CD14-positive monocyte (primary cell): ENCODE measurements at regions of chr1 and their contacts with region 1.

Region 1: GRCh38 chr1:234963180-234963903 is 165.3 kb downstream of the TOMM20 start:
- DNase-seq: peak; percentile 98 to 100 (median 99)
- H3K4me3 ChIP-seq: peak overlapping the region in 1 of 3 experiments; percentile 19
- H3K4me3 Mint-ChIP-seq: peak overlapping the region; percentile 70 to 85
- H3K27ac ChIP-seq: peak overlapping the region; percentile 89 to 100
- H3K27ac Mint-ChIP-seq: peak overlapping the region; percentile 98 to 100 (median 100)
- H3K4me1 ChIP-seq: peaks cover 73 to 78% of the 10 kb centered on the region in 2 donors
- H3K4me1 Mint-ChIP-seq: peaks cover 74% of the 10 kb centered on the region
- H3K27me3 ChIP-seq: no peaks in the 10 kb centered on the region
- H3K27me3 Mint-ChIP-seq: peaks cover 0 to 2% (median 0%) of the 10 kb centered on the region in 3 donors
- CTCF ChIP-seq: no peak

Region 2: DNA sequence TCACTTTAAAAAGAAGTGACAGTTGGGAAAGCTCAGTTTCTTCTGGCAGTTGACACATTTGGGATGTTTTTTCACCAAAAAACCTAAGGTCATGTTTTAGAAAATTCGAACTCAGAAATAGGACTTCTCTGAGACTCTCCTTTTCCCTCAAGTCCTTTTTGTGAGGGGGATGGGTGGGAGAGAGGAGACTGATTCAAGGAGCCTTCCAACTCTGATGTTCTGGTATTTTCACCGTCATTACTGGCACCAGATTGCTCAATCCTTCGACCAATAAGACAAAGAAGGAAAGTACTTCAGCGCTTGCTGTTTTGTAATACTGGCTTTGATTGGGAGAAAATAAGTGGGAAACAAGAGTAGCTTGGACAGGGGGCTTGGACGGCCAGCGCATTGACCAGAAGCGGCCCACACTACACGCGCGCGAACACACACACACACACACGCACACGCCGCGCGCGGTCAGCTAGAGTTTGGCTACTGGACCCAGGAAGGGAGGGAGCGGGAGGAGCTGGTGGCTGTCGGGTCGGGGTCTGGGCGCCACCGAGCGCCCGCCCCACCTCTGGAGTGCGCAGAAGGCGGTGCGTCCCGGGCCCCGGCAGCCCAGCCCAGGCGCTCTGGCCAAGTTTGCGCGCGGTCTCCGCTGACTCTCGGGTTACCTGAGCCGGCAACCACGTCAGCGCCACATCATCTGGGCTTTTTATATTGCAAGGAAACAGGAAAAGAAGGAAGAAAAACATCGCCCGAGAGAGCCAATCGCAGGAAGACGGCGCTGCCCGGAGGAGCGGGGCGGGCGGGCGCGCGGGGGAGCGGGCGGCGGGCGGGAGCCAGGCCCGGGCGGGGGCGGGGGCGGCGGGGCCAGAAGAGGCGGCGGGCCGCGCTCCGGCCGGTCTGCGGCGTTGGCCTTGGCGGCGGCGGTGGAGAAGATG is 1349.8 kb before region 1 on chr1 and contains the start of gene KCNK1:
- intact Hi-C with region 1: no loop called
- DNase-seq: no peak
- H3K4me3 ChIP-seq: no peak within 1 kb of the TSS
- H3K4me3 Mint-ChIP-seq: peak within 1 kb of the TSS; percentile 49 to 80
- H3K27ac ChIP-seq: no peak within 1 kb of the TSS
- H3K27ac Mint-ChIP-seq: no peak within 1 kb of the TSS
- H3K4me1 ChIP-seq: no peaks in the 10 kb centered on the region
- H3K4me1 Mint-ChIP-seq: no peaks in the 10 kb centered on the region
- H3K27me3 ChIP-seq: peaks cover 28 to 55% of the 10 kb centered on the region in 2 donors
- H3K27me3 Mint-ChIP-seq: peaks cover 41 to 64% (median 60%) of the 10 kb centered on the region in 3 donors
- CTCF ChIP-seq: no peak
- polyA plus RNA-seq, gene KCNK1: not detected

Region 3: DNA sequence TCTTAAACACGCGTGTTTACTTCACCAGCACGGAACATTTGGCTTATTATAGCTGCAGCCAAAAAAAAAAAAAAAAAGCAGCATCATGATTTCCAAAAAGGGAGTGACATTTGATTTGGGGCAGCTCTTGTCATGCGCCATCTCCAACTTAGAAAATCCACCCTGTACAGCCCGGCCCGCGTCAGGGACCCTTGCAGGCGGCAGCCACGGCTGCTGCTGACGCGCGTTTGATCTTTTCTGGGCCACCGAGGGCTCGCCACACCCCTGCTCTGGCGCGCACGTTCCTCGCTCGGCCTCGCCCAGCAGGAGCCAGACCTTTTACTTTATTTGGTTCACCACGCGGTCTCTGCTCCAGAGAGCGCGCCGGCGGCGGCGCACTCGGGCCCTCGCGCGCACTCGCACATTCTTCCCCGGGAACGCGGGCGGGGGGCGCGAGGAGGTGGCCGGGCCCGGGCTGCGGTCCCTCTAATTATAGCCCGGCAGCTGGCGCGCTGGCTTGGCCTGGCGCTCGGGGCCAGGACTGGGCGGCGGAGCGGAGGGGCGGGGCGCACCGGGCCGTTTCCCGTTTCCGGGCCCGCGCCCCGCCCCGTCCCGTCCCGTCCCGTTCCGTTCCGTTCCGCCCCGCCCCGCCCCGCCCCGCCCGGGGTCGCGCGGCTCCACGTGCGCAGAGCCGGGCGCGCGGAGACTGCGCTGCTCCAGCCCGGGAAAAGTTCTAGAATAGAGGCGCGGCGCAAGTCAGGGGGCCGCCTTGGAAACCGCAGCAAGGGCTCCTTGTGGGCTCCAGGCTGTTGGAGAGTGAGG is 363.5 kb before region 1 on chr1:
- intact Hi-C with region 1: loop called in 1 of 2 experiments (anchors 5 kb)
- DNase-seq: peak; percentile 61 to 70 (median 65)
- H3K4me3 ChIP-seq: peak overlapping the region; percentile 46 to 95 (median 52)
- H3K4me3 Mint-ChIP-seq: peak overlapping the region; percentile 88 to 100
- H3K27ac ChIP-seq: peak overlapping the region; percentile 81 to 89
- H3K27ac Mint-ChIP-seq: peak overlapping the region; percentile 93 to 100 (median 93)
- H3K4me1 ChIP-seq: peaks cover 57 to 66% of the 10 kb centered on the region in 2 donors
- H3K4me1 Mint-ChIP-seq: peaks cover 42% of the 10 kb centered on the region
- H3K27me3 ChIP-seq: no peaks in the 10 kb centered on the region
- H3K27me3 Mint-ChIP-seq: peaks cover 0 to 2% (median 0%) of the 10 kb centered on the region in 3 donors
- CTCF ChIP-seq: no peak

Region 4: GRCh38 chr1:234851450-234852438 is 111.6 kb before region 1 on chr1:
- intact Hi-C with region 1: loop called in 1 of 2 experiments (anchors 5 kb)
- DNase-seq: peak; percentile 86 to 96 (median 96)
- H3K4me3 ChIP-seq: peak overlapping the region in 1 of 3 experiments; percentile 9
- H3K4me3 Mint-ChIP-seq: peak overlapping the region in 1 of 2 donors; percentile 15
- H3K27ac ChIP-seq: peak overlapping the region; percentile 93 to 100
- H3K27ac Mint-ChIP-seq: peak overlapping the region; percentile 95 to 100 (median 97)
- H3K4me1 ChIP-seq: peaks cover 79 to 84% of the 10 kb centered on the region in 2 donors
- H3K4me1 Mint-ChIP-seq: peaks cover 87% of the 10 kb centered on the region
- H3K27me3 ChIP-seq: no peaks in the 10 kb centered on the region
- H3K27me3 Mint-ChIP-seq: peaks cover 0 to 2% (median 1%) of the 10 kb centered on the region in 3 donors
- CTCF ChIP-seq: no peak

Region 5: GRCh38 chr1:234866007-234866866 is 97.1 kb before region 1 on chr1:
- intact Hi-C with region 1: loop called in 1 of 2 experiments (anchors 5 kb)
- DNase-seq: peak; percentile 95
- H3K4me3 ChIP-seq: no peak overlapping the region
- H3K4me3 Mint-ChIP-seq: peak overlapping the region; percentile 46 to 47
- H3K27ac ChIP-seq: peak overlapping the region; percentile 61 to 85
- H3K27ac Mint-ChIP-seq: peak overlapping the region; percentile 90 to 97 (median 92)
- H3K4me1 ChIP-seq: peaks cover 41 to 53% of the 10 kb centered on the region in 2 donors
- H3K4me1 Mint-ChIP-seq: peaks cover 54% of the 10 kb centered on the region
- H3K27me3 ChIP-seq: no peaks in the 10 kb centered on the region
- H3K27me3 Mint-ChIP-seq: peaks cover 0 to 6% (median 2%) of the 10 kb centered on the region in 3 donors
- CTCF ChIP-seq: no peak